Esophagus muscularis mucosa (tissue), 4 donors: ENCODE measurements at regions of chr1 and their contacts with region 1.

Region 1: DNA sequence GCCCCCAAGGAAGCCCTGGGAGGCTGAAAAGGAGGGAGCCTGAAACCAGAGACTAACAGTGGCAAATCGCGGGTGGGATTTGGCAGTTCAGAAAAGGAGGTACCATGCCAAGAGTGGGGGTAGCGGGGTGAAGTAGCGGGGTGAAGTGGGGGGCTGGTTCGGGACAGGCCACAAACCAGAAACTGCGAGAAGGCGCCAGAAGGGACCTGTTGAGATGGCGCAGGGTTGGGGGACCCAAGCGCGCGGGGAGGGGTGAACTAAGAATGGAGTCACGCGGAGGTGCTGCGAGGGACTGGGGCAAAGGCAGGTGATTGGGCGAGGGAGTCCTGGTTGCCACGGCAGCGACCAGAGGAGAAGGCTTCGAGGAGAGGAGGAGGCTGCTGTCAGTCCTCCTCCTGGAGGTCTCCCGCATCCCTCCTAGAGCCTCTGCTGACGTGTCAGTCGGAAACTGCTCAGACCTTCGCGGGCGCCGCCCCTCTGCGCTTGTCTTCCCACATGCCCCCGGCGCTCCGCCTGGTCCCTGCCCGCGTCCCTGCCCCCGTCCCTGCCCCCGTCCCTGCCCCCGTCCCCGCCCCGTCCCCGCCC is 438 bp upstream of the MIA3 start:
- DNase-seq: peak; percentile 96
- H3K4me3 ChIP-seq: peak overlapping the region; percentile 91 to 100 (median 98)
- H3K27ac ChIP-seq: peak overlapping the region; percentile 68 to 92 (median 78)
- H3K4me1 ChIP-seq: peaks cover 4 to 30% (median 21%) of the 10 kb centered on the region in 4 donors
- H3K27me3 ChIP-seq: no peaks in the 10 kb centered on the region
- CTCF ChIP-seq: no peak
- EP300 ChIP-seq: no peak
- POLR2A ChIP-seq: no peak

Region 2: DNA sequence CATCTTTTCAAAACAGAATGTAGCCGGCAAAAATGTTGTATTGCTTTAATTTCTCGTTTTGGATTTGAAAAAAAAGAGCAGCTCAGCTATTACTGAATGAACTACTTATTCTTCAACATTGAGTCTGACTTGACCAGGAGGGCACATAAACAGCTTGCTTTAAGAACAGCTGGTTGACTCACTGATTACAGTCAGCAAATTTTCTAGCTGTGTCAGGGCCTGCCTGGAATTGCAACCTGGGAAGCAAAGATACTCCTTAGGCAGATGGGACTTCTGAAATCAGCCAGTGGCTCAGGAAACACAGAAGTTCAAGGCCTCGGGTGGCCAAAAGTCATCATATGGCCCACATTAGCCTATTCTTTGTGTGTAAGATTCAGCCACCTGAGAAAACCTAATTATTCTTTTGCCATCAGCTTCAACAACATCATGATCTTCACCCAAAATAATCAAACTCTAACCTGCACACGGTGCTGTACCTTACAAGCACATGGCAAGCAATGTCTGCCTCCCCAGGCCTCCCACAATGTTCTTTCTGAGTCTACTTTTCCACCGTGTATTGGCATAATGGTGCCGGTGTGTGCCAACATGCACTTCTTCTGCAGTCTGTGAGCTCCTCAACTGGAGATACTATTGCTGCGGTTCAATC is 376.8 kb before region 1 on chr1:
- intact Hi-C with region 1: no loop called
- DNase-seq: peak; percentile 74
- H3K4me3 ChIP-seq: no peak overlapping the region
- H3K27ac ChIP-seq: no peak overlapping the region
- H3K4me1 ChIP-seq: no peaks in the 10 kb centered on the region
- H3K27me3 ChIP-seq: no peaks in the 10 kb centered on the region
- CTCF ChIP-seq: no peak
- EP300 ChIP-seq: no peak
- POLR2A ChIP-seq: no peak

Region 3: GRCh38 chr1:222465211-222466041 is 152.0 kb before region 1 on chr1:
- intact Hi-C with region 1: loop called (anchors 5 kb)
- DNase-seq: peak; percentile 95
- H3K4me3 ChIP-seq: peak overlapping the region; percentile 48 to 54 (median 50)
- H3K27ac ChIP-seq: peak overlapping the region; percentile 75 to 86 (median 80)
- H3K4me1 ChIP-seq: peaks cover 0 to 16% (median 10%) of the 10 kb centered on the region in 4 donors
- H3K27me3 ChIP-seq: no peaks in the 10 kb centered on the region
- CTCF ChIP-seq: peak in 2 of 3 experiments; percentile 99 to 100
- EP300 ChIP-seq: no peak
- POLR2A ChIP-seq: no peak